Left colon (tissue), 2 donors: ENCODE measurements at regions of chr1 and their contacts with region 1.

Region 1: DNA sequence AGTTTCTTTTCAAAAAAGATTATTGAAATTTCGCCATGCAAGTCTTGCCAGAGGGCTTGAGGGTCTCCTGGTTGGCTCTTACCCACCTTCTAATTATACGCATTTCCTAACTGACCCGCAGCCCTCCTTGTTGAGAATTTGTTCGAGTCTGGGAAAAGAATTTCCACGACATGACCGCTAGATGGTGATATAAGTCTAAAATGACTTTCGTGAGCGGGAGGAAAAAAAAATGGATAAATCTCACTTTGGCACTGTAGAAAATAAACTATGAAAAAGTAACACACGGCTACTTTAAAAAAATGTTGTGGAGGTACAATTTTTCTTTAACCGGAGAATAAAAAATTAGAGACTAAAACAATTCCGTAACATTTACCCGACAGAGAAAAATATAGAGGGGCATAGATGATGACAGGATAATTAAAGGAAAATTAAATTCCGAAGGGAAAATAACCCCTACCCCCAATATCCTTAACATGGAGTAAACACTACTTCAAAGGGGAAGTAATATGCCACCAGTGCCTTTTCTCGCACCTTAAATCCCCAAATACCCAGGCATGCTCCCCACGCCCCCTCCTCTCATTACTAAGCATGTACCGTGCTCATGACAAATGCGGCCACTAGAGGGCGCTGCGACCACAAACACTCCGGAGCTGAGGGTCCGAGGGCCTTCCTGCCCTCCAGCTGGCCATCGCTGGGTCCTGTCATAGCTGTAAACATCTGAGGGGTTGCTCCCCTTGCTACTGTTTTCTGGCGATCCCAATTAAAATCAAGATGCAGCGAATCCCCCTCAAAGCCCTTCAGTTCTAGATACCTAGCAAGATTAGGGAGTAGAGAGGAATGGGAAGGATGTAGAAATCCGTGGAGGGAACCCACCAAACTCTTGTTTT is 266.9 kb downstream of the ASTN1 start:
- DNase-seq: peak; percentile 31 to 53
- ATAC-seq: peak; percentile 46

Region 2: GRCh38 chr1:176033881-176034280 is 863.7 kb before region 1 on chr1:
- intact Hi-C with region 1: no loop called
- DNase-seq: no peak
- ATAC-seq: no peak

Region 3: GRCh38 chr1:177181631-177182291 is 284.2 kb after region 1 on chr1:
- intact Hi-C with region 1: loop called in 1 of 2 experiments (anchors 10 kb)
- DNase-seq: peak in 1 of 2 donors; percentile 54
- ATAC-seq: peak; percentile 74

Region 4: GRCh38 chr1:177948336-177948972 is 1050.9 kb after region 1 on chr1:
- intact Hi-C with region 1: loop called in 1 of 2 experiments (anchors 10 kb)
- DNase-seq: peak in 1 of 2 donors; percentile 32
- ATAC-seq: peak; percentile 84